Right cardiac atrium (tissue), 5 donors: ENCODE measurements at regions of chr18 and their contacts with region 1.

Region 1: DNA sequence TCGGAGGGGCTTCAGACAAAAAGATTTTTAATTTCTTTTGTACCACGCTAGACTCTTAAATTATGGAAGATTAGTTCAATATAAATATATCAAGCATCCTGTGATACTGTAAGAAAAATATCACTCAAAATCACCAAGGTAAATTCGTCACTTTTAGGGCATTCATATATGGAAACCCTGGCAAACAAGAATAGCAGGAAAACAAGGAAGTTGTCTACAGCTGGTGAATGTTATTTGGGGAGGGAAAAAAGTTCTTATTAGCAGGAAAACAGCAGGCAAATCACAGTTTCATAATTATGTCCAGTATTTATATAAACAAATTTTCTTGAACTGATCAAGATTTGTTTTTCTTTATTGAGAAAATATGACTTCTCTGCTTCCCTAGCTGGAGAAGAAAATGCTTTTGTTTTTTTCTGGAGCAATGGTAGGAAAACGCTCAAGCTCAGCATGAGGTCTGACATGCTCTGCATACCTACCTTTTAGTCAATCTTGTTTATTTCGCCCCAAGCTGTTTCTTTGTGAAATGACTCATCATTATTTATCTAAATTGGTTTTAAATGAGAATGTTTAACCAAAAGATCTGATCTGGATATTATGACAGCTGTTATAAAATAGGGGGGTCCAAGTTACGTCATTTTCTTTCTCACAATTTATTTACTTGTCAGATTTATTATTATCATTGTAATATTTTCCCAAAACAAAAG is 14.7 kb downstream of the LINC00305 start:
- DNase-seq: no peak
- ATAC-seq: no peak
- H3K4me3 ChIP-seq: no peak overlapping the region
- H3K27ac ChIP-seq: no peak overlapping the region
- H3K4me1 ChIP-seq: no peaks in the 10 kb centered on the region
- H3K27me3 ChIP-seq: no peaks in the 10 kb centered on the region

Region 2: GRCh38 chr18:64191069-64191468 is 56.9 kb after region 1 on chr18:
- intact Hi-C with region 1: loop called in 1 of 4 experiments (anchors 10 kb)
- DNase-seq: no peak
- ATAC-seq: no peak
- H3K4me3 ChIP-seq: no peak overlapping the region
- H3K27ac ChIP-seq: no peak overlapping the region
- H3K4me1 ChIP-seq: no peaks in the 10 kb centered on the region
- H3K27me3 ChIP-seq: no peaks in the 10 kb centered on the region

Region 3: DNA sequence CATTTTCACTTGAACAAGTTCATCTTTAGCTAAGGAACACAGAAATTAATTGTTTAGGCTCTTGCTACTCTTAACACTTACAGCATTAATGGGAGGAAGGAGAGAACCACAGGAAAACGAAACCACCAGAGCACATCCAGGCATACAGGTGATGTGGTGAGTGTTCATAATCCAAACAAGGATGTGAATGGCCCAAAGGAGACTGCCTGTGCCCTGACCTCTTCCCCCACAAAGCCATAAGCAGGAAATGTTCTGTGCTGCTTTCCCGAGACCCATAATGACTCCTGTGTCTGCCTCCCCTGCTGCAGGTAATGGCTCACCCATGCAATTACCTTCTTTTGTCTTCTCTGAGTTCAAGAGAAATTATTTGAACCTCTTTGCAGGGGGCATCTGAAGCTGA is 310.6 kb after region 1 on chr18:
- intact Hi-C with region 1: loop called in 1 of 4 experiments (anchors 5 kb)
- DNase-seq: no peak
- ATAC-seq: no peak
- H3K4me3 ChIP-seq: no peak overlapping the region
- H3K27ac ChIP-seq: no peak overlapping the region
- H3K4me1 ChIP-seq: peaks cover 1% of the 10 kb centered on the region
- H3K27me3 ChIP-seq: no peaks in the 10 kb centered on the region